ENCODE measurements at regions of chr7 and their contacts with region 1.

Region 1: DNA sequence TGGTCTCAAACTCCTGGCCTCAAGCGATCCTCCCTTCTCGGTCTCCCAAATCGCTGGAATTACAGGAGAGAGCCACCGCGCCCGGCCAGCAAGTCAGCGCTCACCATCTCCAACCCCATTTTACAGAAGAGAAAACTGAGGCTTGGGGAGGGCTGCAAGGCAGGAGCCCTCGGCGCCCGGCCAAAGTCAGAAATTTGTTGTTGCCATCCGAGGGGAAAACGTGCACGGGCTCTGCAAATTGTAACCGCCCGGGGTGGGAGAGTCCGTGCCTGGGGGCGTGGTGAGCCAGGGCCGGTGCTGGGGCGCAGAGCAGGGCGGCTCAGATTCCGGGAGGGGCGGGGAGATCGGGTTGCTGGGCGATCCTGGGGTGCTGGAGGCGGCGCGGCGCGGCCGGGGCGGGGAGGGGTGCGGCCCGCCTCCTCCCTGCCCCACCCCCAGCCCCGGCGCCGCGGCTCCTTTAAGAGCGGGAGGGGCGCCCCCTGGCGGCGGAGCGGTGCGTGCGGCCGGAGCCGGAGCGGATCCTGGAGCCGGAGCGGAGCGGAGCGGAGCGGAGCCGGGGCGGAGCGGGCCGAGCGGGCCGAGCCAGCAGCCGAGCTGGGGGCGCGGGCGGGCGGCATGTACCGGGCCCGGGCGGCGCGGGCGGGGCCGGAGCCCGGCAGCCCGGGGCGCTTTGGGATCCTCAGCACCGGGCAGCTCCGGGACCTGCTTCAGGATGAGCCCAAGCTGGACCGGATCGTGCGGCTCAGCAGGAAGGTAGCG is at the start of gene VPS37D:
- DNase-seq: peak; percentile 69 to 97
- H3K4me3 ChIP-seq: peak within 1 kb of the TSS; percentile 40; the same call in 1 of the 2 replicates
- H3K27ac ChIP-seq: no peak within 1 kb of the TSS
- H3K4me1 ChIP-seq: 0 out of 2 replicates have a peak, but pooled peaks cover 4% of the 10 kb centered on the region
- H3K27me3 ChIP-seq: no peaks in the 10 kb centered on the region
- CTCF ChIP-seq: peak; percentile 50; the same call in 1 of the 2 replicates
- total RNA-seq, gene VPS37D: 8.3 and 12.4 TPM in 2 replicates

Region 2: GRCh38 chr7:73522105-73522872 is 145.2 kb before region 1 on chr7 and contains the start of gene BAZ1B:
- CTCF ChIA-PET with region 1: no interaction called
- POLR2A ChIA-PET with region 1: no interaction called
- intact Hi-C with region 1: loop called (anchors 5 kb)
- DNase-seq: peak; percentile 93 to 98
- H3K4me3 ChIP-seq: peak within 1 kb of the TSS; percentile 84
- H3K27ac ChIP-seq: peak within 1 kb of the TSS; percentile 39
- H3K4me1 ChIP-seq: peaks cover 28% of the 10 kb centered on the region
- H3K27me3 ChIP-seq: no peaks in the 10 kb centered on the region
- CTCF ChIP-seq: no peak
- total RNA-seq, gene BAZ1B: 73.6 and 88.4 TPM in 2 replicates

Region 3: DNA sequence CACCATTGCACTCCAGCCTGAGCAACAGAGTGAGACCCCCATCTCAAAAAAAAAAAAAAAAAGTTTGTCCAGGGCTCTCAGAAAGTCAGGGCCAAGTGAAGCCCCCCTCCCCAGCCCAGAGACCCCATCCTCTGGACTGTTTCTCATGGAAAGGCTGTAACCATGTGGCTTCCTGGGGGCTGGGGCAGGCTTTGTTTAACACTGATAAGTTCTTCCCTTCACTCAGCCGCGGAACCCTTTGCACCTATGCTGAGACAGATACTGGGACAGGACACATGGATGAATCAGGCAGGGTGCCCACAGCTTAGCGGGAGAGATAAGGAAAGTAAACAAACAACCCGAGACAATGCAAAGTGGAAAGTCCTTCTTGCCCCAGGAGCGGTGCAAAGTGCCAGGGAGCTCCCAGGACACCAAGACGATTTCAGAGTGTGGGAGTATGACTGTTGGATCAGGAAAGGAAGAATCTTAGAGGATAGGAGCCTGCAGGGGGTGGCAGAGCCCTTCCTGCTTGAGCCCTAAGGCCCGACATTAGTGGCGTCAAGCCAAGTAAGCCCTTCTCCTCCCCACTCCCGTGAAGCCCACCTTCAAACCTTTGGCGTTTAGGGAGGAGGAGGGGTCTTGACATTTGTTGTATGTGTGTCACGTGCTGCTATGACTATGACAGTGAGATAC is 54.8 kb before region 1 on chr7:
- CTCF ChIA-PET with region 1: no interaction called
- POLR2A ChIA-PET with region 1: interaction called, 5 read pairs
- intact Hi-C with region 1: loop called (anchors 1 kb)
- DNase-seq: peak; percentile 77 to 80
- H3K4me3 ChIP-seq: no peak overlapping the region
- H3K27ac ChIP-seq: no peak overlapping the region
- H3K4me1 ChIP-seq: peaks cover 21% of the 10 kb centered on the region
- H3K27me3 ChIP-seq: no peaks in the 10 kb centered on the region
- CTCF ChIP-seq: peak; percentile 40; the same call in 1 of the 2 replicates

Region 4: GRCh38 chr7:73638911-73639310 is 28.6 kb before region 1 on chr7:
- CTCF ChIA-PET with region 1: interaction called, 3 read pairs
- POLR2A ChIA-PET with region 1: interaction called, 17 read pairs
- intact Hi-C with region 1: no loop called
- DNase-seq: no peak
- H3K4me3 ChIP-seq: no peak overlapping the region
- H3K27ac ChIP-seq: no peak overlapping the region
- H3K4me1 ChIP-seq: peaks cover 12% of the 10 kb centered on the region
- H3K27me3 ChIP-seq: no peaks in the 10 kb centered on the region
- CTCF ChIP-seq: no peak

Measured in PC-9 (cell line).